CD8-positive, alpha-beta T cell (primary cell): ENCODE measurements at regions of chr2 and their contacts with region 1.

Region 1: DNA sequence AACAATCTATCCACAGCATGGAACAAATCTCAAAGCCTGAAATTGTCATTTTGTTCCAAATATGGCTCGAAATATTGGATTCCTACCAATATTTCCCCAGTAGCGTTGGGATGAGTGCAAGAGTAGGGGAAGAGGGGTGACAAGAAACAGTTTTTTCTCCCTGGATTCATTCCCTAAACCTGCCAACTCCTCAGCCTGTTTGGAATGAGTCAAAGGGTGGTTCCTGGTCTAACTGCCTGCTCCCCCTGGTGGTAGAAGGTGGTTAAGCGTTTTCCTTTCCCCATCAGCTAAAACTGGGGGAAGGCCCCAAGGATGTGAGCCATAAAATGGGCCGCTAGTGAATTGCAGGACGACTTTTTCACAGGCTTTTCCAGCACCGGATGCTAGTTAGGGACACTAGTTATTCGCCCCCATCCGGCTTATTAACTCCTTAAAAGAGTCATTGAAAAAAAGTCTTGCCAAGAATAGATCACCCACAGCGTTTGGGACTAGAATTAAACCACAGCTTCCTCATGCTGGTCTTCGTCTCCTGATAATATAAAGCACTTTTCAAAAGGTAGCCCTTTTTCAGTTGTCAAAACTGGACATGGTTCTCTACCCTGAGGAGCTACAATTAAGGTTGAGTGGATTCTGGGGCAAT is 72.5 kb downstream of the DHRS9 start:
- DNase-seq: peak; percentile 11 to 75 (median 66)
- ATAC-seq: peak; percentile 55
- H3K4me3 ChIP-seq: no peak overlapping the region
- H3K4me3 Mint-ChIP-seq: no peak overlapping the region
- H3K27ac ChIP-seq: no peak overlapping the region
- H3K27ac Mint-ChIP-seq: no peak overlapping the region
- H3K4me1 ChIP-seq: no peaks in the 10 kb centered on the region
- H3K4me1 Mint-ChIP-seq: no peaks in the 10 kb centered on the region
- H3K27me3 ChIP-seq: no peaks in the 10 kb centered on the region
- H3K27me3 Mint-ChIP-seq: no peaks in the 10 kb centered on the region
- CTCF ChIP-seq: peak; percentile 90

Region 2: DNA sequence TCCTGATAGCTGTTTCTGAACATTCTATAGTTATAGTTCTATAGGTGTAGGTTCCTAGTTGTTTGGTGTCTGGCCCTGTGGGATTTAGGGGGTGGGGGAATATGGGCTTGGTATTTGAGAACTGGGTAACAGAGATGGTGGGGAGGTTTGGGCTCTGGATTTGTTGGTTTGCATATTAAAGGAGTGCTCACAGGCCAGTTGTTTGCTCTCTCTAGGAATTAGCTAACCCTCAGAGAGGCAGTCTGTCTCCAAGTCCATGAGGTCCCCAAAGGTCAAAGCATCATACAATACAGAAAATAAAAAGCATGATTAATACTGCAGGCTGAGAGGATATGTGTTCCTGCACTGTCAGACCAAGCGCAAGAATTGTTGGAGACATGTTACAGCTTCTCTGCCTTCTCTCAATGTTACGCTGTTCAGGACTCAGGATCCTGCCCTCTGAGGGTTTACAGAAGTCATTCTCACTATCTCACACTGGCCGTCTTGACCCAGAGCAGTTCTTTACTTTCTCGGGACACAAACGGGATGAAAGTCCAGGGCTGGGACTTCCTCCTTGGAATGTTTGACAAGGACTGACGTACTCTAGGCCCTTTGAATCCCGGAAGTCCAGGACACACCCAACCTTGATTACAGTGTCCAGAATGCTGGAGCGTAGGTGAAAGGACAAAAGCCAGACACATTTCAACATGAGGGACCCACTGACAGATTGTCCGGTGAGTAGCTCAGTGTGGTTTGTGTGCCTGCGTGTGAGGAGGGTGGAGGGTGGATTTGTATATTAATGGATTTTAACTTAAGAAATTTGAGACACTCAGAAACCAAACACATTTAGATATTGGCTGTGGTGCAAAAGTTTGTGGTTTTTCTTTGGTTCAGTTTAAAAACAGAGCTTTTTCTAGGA is 339.6 kb before region 1 on chr2 and contains the start of gene NOSTRIN:
- CTCF ChIA-PET with region 1: no interaction called
- POLR2A ChIA-PET with region 1: no interaction called
- intact Hi-C with region 1: no loop called
- DNase-seq: no peak
- ATAC-seq: no peak
- H3K4me3 ChIP-seq: no peak within 1 kb of the TSS
- H3K4me3 Mint-ChIP-seq: no peak within 1 kb of the TSS
- H3K27ac ChIP-seq: no peak within 1 kb of the TSS
- H3K27ac Mint-ChIP-seq: no peak within 1 kb of the TSS
- H3K4me1 ChIP-seq: no peaks in the 10 kb centered on the region
- H3K4me1 Mint-ChIP-seq: no peaks in the 10 kb centered on the region
- H3K27me3 ChIP-seq: no peaks in the 10 kb centered on the region
- H3K27me3 Mint-ChIP-seq: no peaks in the 10 kb centered on the region
- CTCF ChIP-seq: no peak
- total RNA-seq, gene NOSTRIN: 0.19 to 0.33 TPM

Region 3: GRCh38 chr2:168961450-168962229 is 180.2 kb before region 1 on chr2:
- CTCF ChIA-PET with region 1: interaction called, 126 read pairs
- POLR2A ChIA-PET with region 1: no interaction called
- intact Hi-C with region 1: loop called (anchors 1 kb)
- DNase-seq: peak in 7 of 9 experiments; percentile 3 to 79 (median 28)
- ATAC-seq: peak; percentile 88
- H3K4me3 ChIP-seq: no peak overlapping the region
- H3K4me3 Mint-ChIP-seq: no peak overlapping the region
- H3K27ac ChIP-seq: no peak overlapping the region
- H3K27ac Mint-ChIP-seq: no peak overlapping the region
- H3K4me1 ChIP-seq: peaks cover 15% of the 10 kb centered on the region
- H3K4me1 Mint-ChIP-seq: peaks cover 34% of the 10 kb centered on the region
- H3K27me3 ChIP-seq: no peaks in the 10 kb centered on the region
- H3K27me3 Mint-ChIP-seq: no peaks in the 10 kb centered on the region
- CTCF ChIP-seq: peak; percentile 91

Region 4: DNA sequence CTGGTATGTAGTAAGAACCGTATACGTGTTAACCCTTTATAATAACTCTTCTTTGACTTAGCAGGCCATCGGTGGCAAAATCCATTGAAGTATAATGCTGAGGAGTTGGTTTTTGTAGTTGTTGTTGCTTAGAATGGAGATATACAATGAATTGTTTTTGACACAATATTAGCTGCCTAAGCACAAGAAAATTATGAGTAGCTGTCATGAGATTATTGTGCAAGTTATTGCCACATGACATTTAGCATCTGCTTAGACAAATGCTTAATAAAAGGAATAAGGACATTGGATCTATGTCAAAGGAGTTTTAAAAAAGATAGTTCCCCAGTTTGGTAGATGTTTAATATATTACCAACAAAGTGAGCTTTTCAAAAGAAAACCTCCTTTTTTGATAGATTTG is 170.6 kb before region 1 on chr2:
- CTCF ChIA-PET with region 1: interaction called, 30 read pairs
- POLR2A ChIA-PET with region 1: no interaction called
- intact Hi-C with region 1: no loop called
- DNase-seq: no peak
- ATAC-seq: no peak
- H3K4me3 ChIP-seq: no peak overlapping the region
- H3K4me3 Mint-ChIP-seq: no peak overlapping the region
- H3K27ac ChIP-seq: no peak overlapping the region
- H3K27ac Mint-ChIP-seq: no peak overlapping the region
- H3K4me1 ChIP-seq: no peaks in the 10 kb centered on the region
- H3K4me1 Mint-ChIP-seq: peaks cover 2% of the 10 kb centered on the region
- H3K27me3 ChIP-seq: no peaks in the 10 kb centered on the region
- H3K27me3 Mint-ChIP-seq: no peaks in the 10 kb centered on the region
- CTCF ChIP-seq: no peak

Region 5: GRCh38 chr2:169034256-169034655 is 107.6 kb before region 1 on chr2:
- CTCF ChIA-PET with region 1: no interaction called
- POLR2A ChIA-PET with region 1: no interaction called
- intact Hi-C with region 1: loop called in 1 of 2 experiments (anchors 5 kb)
- DNase-seq: peak in 3 of 9 experiments; percentile 12 to 32 (median 23)
- ATAC-seq: no peak
- H3K4me3 ChIP-seq: no peak overlapping the region
- H3K4me3 Mint-ChIP-seq: no peak overlapping the region
- H3K27ac ChIP-seq: no peak overlapping the region
- H3K27ac Mint-ChIP-seq: peak overlapping the region; percentile 7
- H3K4me1 ChIP-seq: no peaks in the 10 kb centered on the region
- H3K4me1 Mint-ChIP-seq: peaks cover 15% of the 10 kb centered on the region
- H3K27me3 ChIP-seq: no peaks in the 10 kb centered on the region
- H3K27me3 Mint-ChIP-seq: no peaks in the 10 kb centered on the region
- CTCF ChIP-seq: no peak

Region 6: GRCh38 chr2:169119126-169119770 is 22.6 kb before region 1 on chr2:
- CTCF ChIA-PET with region 1: interaction called, 57 read pairs
- POLR2A ChIA-PET with region 1: no interaction called
- intact Hi-C with region 1: no loop called
- DNase-seq: no peak
- ATAC-seq: no peak
- H3K4me3 ChIP-seq: no peak overlapping the region
- H3K4me3 Mint-ChIP-seq: no peak overlapping the region
- H3K27ac ChIP-seq: no peak overlapping the region
- H3K27ac Mint-ChIP-seq: no peak overlapping the region
- H3K4me1 ChIP-seq: no peaks in the 10 kb centered on the region
- H3K4me1 Mint-ChIP-seq: peaks cover 7% of the 10 kb centered on the region
- H3K27me3 ChIP-seq: no peaks in the 10 kb centered on the region
- H3K27me3 Mint-ChIP-seq: peaks cover 4% of the 10 kb centered on the region
- CTCF ChIP-seq: no peak

Region 7: GRCh38 chr2:169159686-169160085 is 17.9 kb after region 1 on chr2:
- CTCF ChIA-PET with region 1: interaction called, 19 read pairs
- POLR2A ChIA-PET with region 1: no interaction called
- intact Hi-C with region 1: no loop called
- DNase-seq: no peak
- ATAC-seq: no peak
- H3K4me3 ChIP-seq: no peak overlapping the region
- H3K4me3 Mint-ChIP-seq: no peak overlapping the region
- H3K27ac ChIP-seq: no peak overlapping the region
- H3K27ac Mint-ChIP-seq: no peak overlapping the region
- H3K4me1 ChIP-seq: no peaks in the 10 kb centered on the region
- H3K4me1 Mint-ChIP-seq: no peaks in the 10 kb centered on the region
- H3K27me3 ChIP-seq: no peaks in the 10 kb centered on the region
- H3K27me3 Mint-ChIP-seq: peaks cover 15% of the 10 kb centered on the region
- CTCF ChIP-seq: no peak